ENCODE measurements at regions of chr5 and their contacts with region 1.

Region 1: DNA sequence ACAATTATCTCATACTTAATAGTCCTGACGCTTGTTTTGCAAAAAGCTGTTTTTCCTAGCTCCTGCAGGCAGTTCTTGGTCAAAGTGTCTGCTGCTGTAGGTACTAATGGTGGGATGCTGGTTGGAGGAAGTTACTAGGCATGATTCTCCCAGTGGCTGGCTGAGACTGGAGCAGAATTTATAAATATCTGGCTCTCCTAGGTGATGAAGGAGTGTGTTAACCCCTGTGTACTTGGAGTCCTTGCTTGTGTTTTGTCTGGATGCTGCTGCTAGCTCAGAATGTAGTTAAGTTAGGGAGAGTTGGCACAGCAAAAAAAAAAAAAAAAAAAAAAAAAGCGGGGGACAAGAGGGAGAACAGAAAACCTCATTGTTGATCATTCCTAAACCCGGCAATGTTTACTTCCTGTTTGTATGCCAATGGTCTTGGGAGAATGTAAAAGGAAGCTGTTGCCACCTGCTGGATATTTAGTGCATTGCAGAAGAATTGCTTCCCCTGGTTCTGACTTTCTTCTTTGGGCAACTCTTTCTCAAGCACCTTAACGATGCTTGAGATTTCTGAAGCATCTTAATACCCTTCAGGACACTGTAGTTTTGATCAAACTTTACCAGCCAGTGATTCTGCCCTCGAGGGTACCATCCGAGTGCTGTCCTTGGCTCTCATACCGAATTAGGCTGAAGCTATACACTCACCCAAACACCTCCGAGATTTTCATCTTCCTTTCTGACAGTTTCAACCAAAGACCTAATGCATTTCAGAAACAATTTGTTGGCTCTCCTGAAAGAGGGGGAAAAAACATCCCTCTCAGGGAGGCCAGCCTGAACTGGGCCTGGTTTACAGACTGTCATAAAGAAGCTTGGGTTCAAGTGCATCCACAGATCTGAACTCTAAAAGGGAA is 71.7 kb upstream of the WWC1 start:
- DNase-seq: peak; percentile 43 to 62
- H3K4me3 ChIP-seq: no peak overlapping the region
- H3K27ac ChIP-seq: no peak overlapping the region
- H3K4me1 ChIP-seq: no peaks in the 10 kb centered on the region
- H3K27me3 ChIP-seq: peaks cover 82% of the 10 kb centered on the region
- CTCF ChIP-seq: peak; percentile 88

Region 2: DNA sequence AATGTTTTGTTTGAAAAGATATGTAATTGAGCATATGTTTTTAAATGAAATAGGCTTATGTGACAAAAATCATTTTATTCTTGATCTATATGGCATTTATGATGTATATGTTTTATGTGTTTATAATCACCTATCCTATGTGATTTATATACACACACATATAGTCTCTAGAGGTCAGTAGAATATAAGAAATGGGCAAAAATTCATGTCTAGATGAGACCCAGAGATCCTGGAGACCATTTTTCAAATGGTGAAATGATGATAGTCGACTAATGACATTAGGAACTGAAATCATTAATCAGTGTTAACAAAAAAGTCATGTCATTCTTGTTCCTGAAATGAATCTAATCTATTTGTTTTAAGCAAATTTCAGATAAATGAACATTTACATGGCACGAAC is 637.5 kb before region 1 on chr5:
- CTCF ChIA-PET with region 1: no interaction called
- POLR2A ChIA-PET with region 1: no interaction called
- intact Hi-C with region 1: loop called (anchors 1 kb)
- DNase-seq: no peak
- H3K4me3 ChIP-seq: no peak overlapping the region
- H3K27ac ChIP-seq: no peak overlapping the region
- H3K4me1 ChIP-seq: no peaks in the 10 kb centered on the region
- H3K27me3 ChIP-seq: peaks cover 5% of the 10 kb centered on the region
- CTCF ChIP-seq: peak; percentile 54

Region 3: DNA sequence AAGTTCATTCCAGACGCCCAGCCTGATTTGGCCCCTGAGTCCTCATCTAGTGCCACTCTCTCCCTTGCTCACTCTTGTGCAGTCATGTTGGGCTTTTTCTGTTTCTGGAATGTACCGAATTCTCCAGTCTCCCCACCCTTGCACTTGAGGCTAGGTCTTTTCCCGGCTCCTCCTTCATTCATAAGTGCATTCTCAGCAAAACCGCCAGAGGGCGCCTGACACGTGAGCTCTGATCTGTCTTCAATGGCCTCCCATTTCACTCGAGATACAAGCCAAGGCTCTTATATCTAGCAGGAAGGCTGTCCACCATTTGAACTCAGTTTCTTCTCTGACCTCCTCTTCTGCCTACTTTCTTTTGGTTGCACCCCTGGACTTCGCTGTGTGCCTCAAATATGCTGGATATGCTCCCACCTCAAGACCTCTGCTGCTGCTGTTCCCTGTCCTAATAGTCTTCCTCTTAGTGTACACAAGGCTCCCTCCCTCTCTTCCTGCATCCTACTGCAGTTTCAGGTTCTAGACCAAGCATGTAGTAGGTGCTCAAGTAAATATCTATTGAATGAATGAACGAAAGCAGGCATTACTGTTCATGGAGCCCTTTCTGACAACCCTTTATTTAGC is 496.4 kb before region 1 on chr5:
- CTCF ChIA-PET with region 1: no interaction called
- POLR2A ChIA-PET with region 1: no interaction called
- intact Hi-C with region 1: loop called (anchors 10 kb)
- DNase-seq: peak; percentile 66 to 70
- H3K4me3 ChIP-seq: no peak overlapping the region
- H3K27ac ChIP-seq: no peak overlapping the region
- H3K4me1 ChIP-seq: 0 out of 2 replicates have a peak, but pooled peaks cover 5% of the 10 kb centered on the region
- H3K27me3 ChIP-seq: no peaks in the 10 kb centered on the region
- CTCF ChIP-seq: peak; percentile 93

Region 4: DNA sequence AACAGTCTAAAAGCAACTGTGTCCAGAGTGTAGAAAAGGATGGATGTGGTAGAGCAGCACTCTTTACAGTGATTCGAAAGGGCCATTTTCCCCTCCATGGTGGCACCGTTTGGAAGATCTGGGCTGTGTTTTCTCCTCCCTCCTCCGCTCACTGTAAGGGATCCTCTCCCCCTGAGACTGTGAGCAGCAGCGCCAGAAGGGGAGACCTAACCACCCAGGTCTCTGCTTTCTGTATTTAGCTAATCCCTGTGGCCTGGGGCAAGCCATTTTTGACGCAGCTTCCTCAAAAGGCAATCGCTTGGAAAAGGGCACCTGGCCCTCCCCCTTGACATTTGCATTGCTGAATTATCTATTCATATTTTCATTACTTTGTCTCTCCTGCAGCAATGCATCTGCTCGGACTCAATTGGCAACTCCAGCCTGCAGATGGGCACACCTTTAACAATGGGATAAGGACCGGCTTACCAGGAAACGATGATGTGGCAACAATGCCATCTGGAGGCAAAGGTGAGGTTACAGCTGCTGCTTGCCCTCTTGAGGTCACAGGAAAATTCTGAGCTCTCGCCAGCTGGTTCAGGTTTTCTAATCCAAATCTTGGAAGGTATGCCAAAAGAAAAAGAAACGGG is 172.6 kb before region 1 on chr5:
- CTCF ChIA-PET with region 1: interaction called, 17 read pairs
- POLR2A ChIA-PET with region 1: no interaction called
- intact Hi-C with region 1: loop called (anchors 10 kb)
- DNase-seq: peak; percentile 47 to 64
- H3K4me3 ChIP-seq: no peak overlapping the region
- H3K27ac ChIP-seq: no peak overlapping the region
- H3K4me1 ChIP-seq: no peaks in the 10 kb centered on the region
- H3K27me3 ChIP-seq: peaks cover 18% of the 10 kb centered on the region; the same call in 1 of the 2 replicates
- CTCF ChIP-seq: peak; percentile 62

Region 5: DNA sequence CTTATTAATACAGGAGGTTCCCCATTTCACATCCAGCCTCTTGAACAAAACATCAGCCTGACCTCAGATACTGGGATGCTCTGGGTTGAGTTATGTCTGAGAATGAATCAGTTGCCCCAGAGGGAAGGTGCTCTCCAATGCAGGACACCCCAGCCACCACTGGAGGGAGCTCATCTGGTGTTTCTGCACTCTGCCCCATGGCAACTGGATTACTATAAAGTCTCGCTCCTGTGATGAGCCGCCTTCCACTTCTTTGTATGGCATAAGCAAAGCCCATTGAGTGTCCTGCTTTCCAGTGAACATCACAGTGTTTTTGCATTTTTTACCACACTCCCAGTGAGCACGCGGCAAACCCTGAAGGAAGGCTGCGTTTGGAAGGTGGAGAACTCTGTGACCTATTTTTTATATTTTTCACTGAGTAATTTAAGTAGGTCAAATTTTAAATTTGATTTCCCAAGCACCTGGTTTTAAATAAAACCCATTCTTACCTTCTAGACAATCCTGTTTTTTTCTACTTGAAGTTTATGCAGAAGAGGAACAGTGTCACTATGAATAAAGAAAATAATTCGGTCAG is 105.2 kb before region 1 on chr5:
- CTCF ChIA-PET with region 1: no interaction called
- POLR2A ChIA-PET with region 1: no interaction called
- intact Hi-C with region 1: loop called (anchors 2 kb)
- DNase-seq: peak; percentile 36 to 50
- H3K4me3 ChIP-seq: no peak overlapping the region
- H3K27ac ChIP-seq: no peak overlapping the region
- H3K4me1 ChIP-seq: no peaks in the 10 kb centered on the region
- H3K27me3 ChIP-seq: peaks cover 63% of the 10 kb centered on the region
- CTCF ChIP-seq: peak; percentile 70

Region 6: GRCh38 chr5:168174376-168174775 is 45.4 kb before region 1 on chr5:
- CTCF ChIA-PET with region 1: no interaction called
- POLR2A ChIA-PET with region 1: no interaction called
- intact Hi-C with region 1: no loop called
- DNase-seq: no peak
- H3K4me3 ChIP-seq: no peak overlapping the region
- H3K27ac ChIP-seq: no peak overlapping the region
- H3K4me1 ChIP-seq: no peaks in the 10 kb centered on the region
- H3K27me3 ChIP-seq: peaks cover 97% of the 10 kb centered on the region
- CTCF ChIP-seq: no peak